WTC11 (cell line): ENCODE measurements at regions of chr10 and their contacts with region 1.

Region 1: GRCh38 chr10:95430231-95430951 is 130.8 kb downstream of the SORBS1 start:
- DNase-seq: peak; percentile 55
- ATAC-seq: peak; percentile 96
- H3K4me3 Mint-ChIP-seq: no peak overlapping the region
- H3K27ac Mint-ChIP-seq: no peak overlapping the region
- H3K4me1 Mint-ChIP-seq: peaks cover 2% of the 10 kb centered on the region; the same call in 1 of the 2 replicates
- H3K27me3 Mint-ChIP-seq: no peaks in the 10 kb centered on the region
- CTCF ChIP-seq: peak; percentile 96

Region 2: DNA sequence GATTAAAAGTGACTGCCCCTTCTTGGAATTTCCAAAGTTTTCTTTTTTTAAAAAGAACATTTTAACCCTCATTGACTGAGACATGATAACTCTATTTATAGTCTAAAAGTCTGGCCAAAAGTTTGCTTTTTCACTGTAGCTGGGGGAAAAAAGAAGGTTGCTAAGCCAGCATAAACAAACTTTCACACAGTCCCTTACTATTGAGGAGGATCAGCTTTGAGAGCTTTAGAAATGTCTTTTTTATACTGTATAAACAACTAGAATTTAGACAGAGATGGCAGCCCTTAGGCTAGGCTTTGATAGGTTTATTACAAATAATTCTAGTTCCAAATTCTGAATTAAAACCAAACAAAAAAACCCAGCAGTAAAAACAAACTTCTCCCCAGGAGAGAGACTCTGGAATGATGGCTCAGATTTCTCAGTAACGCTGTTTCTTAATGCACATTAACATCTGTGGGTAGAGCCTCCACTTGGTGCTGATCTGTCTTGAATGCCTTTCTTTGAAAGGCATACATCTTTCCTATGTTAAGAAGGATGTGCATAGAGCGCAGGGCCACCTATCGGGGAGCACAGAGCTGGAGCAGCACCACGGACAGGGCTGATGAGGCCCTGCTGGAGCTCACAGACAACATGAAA is 38.7 kb before region 1 on chr10:
- CTCF ChIA-PET with region 1: interaction called, 39 read pairs
- POLR2A ChIA-PET with region 1: no interaction called
- DNase-seq: peak; percentile 55
- ATAC-seq: peak; percentile 94
- H3K4me3 Mint-ChIP-seq: no peak overlapping the region
- H3K27ac Mint-ChIP-seq: no peak overlapping the region
- H3K4me1 Mint-ChIP-seq: peaks cover 17% of the 10 kb centered on the region
- H3K27me3 Mint-ChIP-seq: no peaks in the 10 kb centered on the region
- CTCF ChIP-seq: no peak

Region 3: DNA sequence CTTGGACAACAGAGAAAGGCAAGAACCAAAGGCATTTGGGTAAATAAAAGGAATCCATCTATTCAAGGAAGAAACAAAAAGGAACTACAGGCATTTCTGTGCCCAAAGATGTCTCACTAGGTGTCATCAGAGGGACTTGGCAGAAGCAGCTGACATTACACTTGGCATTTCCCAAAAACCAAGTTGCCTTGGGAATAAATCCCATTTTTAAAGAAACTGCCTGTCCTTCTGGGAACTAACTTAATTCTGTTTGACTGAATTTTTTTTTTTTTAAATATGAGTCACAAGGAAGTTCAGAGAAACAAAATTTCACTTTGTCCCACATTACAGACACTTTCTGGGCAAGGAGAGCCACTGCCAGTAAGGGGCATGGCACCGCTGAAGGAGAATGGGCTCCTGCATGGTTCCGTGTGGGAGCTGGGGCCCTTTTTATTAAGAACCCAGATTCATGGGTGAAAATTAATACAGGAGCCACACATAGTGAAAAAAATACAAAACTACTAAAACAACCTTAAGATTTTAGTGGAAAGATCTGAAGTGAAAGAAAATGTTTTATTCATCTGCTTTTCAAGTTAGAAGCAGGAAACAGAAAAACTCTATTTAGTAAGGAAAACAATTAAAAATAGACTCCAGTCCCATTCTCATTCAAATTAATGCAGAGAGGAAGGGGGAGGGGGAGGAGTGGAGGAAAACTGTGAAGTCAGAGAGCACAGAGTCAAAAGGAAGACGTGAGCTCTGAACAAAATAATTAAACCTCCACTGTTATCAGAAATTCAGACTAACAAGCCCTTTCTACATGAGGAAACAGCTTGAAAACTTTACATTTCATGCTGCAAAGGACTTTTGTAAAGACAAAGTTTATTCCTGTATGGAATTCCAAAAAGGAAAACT is 21.2 kb before region 1 on chr10:
- CTCF ChIA-PET with region 1: interaction called, 21 read pairs
- POLR2A ChIA-PET with region 1: no interaction called
- DNase-seq: no peak
- ATAC-seq: peak; percentile 12
- H3K4me3 Mint-ChIP-seq: peak overlapping the region; percentile 48
- H3K27ac Mint-ChIP-seq: peak overlapping the region; percentile 92
- H3K4me1 Mint-ChIP-seq: peaks cover 43% of the 10 kb centered on the region
- H3K27me3 Mint-ChIP-seq: no peaks in the 10 kb centered on the region
- CTCF ChIP-seq: no peak

Region 4: GRCh38 chr10:95440756-95441546 is 10.6 kb after region 1 on chr10:
- CTCF ChIA-PET with region 1: interaction called, 28 read pairs
- POLR2A ChIA-PET with region 1: no interaction called
- DNase-seq: no peak
- ATAC-seq: no peak
- H3K4me3 Mint-ChIP-seq: no peak overlapping the region
- H3K27ac Mint-ChIP-seq: no peak overlapping the region
- H3K4me1 Mint-ChIP-seq: peaks cover 6% of the 10 kb centered on the region
- H3K27me3 Mint-ChIP-seq: no peaks in the 10 kb centered on the region
- CTCF ChIP-seq: no peak

Region 5: GRCh38 chr10:95459446-95460045 is 29.2 kb after region 1 on chr10:
- CTCF ChIA-PET with region 1: interaction called, 12 read pairs
- POLR2A ChIA-PET with region 1: no interaction called
- DNase-seq: no peak
- ATAC-seq: peak; percentile 43
- H3K4me3 Mint-ChIP-seq: no peak overlapping the region
- H3K27ac Mint-ChIP-seq: peak overlapping the region; percentile 69; the same call in 1 of the 2 replicates
- H3K4me1 Mint-ChIP-seq: peaks cover 62% of the 10 kb centered on the region
- H3K27me3 Mint-ChIP-seq: no peaks in the 10 kb centered on the region
- CTCF ChIP-seq: no peak

Region 6: GRCh38 chr10:95588025-95588424 is 157.6 kb after region 1 on chr10:
- CTCF ChIA-PET with region 1: interaction called, 13 read pairs
- POLR2A ChIA-PET with region 1: no interaction called
- DNase-seq: no peak
- ATAC-seq: no peak
- H3K4me3 Mint-ChIP-seq: no peak overlapping the region
- H3K27ac Mint-ChIP-seq: no peak overlapping the region
- H3K4me1 Mint-ChIP-seq: no peaks in the 10 kb centered on the region
- H3K27me3 Mint-ChIP-seq: no peaks in the 10 kb centered on the region; the same call in 1 of the 2 replicates
- CTCF ChIP-seq: no peak